ENCODE measurements at regions of chr3 and their contacts with region 1.

Region 1: DNA sequence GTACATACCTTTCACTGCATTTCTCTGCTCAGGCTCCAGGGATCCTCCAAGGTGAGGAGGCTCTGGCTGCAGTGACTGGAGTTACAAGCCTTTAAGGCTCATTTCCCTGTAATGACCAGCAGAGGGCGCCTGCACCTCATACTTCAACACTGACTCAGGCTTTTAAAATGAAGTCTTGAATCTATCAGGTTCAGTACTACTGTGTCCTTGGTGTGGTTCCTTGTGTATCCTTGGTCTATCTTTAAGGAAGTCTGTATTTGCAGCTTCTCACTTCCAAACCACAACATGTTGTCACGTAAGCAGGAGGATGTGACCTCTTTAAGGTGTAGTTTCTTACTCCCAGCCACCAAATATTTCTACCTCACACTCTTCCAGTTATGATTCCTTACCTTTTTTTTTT is 122.5 kb upstream of the ZBED2 start:
- DNase-seq: peak; percentile 84
- ATAC-seq: peak; percentile 92
- H3K4me3 ChIP-seq: no peak overlapping the region
- H3K27ac ChIP-seq: no peak overlapping the region
- H3K4me1 ChIP-seq: peaks cover 3% of the 10 kb centered on the region; the same call in 1 of the 2 replicates
- H3K27me3 ChIP-seq: no peaks in the 10 kb centered on the region
- CTCF ChIP-seq: peak; percentile 93
- POLR2A ChIP-seq: peak; percentile 46; the same call in 1 of the 2 replicates
- RAD21 ChIP-seq: peak; percentile 99

Region 2: DNA sequence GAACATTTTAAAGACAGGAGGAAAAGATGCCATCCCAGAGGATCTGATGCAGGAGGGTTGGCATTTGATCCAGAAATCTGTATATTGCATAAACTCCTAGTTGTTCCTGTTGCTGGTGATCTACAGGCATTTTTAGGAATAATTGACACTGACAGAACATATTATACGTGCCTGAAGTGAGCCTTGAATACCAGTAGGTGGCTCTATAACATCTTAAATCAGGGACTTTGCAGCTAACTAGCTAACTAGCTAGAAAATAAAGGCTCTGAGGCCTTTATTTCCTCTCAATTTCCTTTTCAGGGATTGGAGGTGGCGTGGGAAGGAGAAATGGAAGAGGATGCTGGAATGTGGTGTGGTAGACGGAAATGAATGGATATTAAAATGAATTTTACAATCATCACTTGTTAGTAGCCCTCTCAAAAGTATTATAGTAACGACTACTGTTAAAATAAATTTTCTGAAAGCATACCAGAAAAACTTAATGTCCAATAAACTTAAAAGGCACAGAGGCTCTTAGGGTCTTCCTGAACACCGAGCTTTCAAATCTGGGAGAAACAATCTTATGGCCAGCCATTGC is 48.6 kb before region 1 on chr3:
- CTCF ChIA-PET with region 1: interaction called, 17 read pairs
- POLR2A ChIA-PET with region 1: no interaction called
- dilution Hi-C with region 1: no loop called
- in situ Hi-C with region 1: no loop called
- intact Hi-C with region 1: loop called (anchors 1 kb)
- DNase-seq: peak; percentile 76
- ATAC-seq: peak; percentile 76
- H3K4me3 ChIP-seq: no peak overlapping the region
- H3K27ac ChIP-seq: no peak overlapping the region
- H3K4me1 ChIP-seq: peaks cover 5% of the 10 kb centered on the region
- H3K27me3 ChIP-seq: no peaks in the 10 kb centered on the region
- CTCF ChIP-seq: peak; percentile 88
- POLR2A ChIP-seq: no peak
- RAD21 ChIP-seq: peak; percentile 87

Region 3: DNA sequence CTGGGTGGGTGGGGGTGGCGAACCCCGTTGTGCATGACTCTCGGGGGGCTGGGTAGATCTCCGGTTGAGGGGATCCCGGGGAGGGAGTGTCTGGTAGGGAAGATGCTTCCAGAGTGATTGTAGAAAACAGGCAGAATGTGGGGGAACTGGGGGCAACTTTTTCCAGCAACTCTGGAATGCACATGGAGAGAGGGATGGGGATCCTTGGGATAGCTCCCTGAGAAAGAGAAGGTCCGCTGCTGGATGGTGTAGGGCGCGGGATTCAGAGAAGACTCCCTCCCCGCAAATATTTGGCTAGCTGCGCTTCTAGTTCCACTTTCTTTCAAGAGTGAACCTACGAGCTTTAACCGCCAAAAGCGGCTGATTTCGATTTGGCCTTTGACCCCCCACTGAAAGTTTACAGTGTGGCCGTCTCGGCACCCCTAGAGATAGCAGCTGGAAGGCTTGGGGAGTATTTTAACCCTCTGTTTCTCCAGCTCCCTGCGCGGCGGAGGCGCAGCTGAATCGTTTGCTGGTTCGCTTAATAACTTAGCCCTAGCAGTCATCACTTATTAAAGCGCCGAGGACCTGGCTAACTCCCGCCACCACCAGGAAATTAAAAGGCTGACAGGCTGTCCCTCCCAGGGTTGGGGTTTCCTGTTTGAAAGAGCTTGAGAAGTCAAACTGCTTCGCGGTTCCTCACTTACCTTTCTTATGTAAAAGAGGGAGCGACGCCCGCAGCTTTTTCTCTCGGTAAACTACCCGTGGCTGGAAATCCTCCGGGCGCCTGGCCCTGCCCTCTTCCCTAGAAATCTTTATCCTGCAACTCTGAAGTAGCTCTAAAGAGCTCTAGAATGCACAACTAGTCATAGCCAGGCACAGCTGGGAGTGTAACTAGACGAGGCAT is 142.6 kb after region 1 on chr3:
- CTCF ChIA-PET with region 1: interaction called, 45 read pairs
- POLR2A ChIA-PET with region 1: no interaction called
- dilution Hi-C with region 1: no loop called
- in situ Hi-C with region 1: loop called (anchors 5 kb)
- intact Hi-C with region 1: loop called (anchors 1 kb)
- DNase-seq: peak; percentile 87
- ATAC-seq: peak; percentile 62
- H3K4me3 ChIP-seq: peak overlapping the region; percentile 77
- H3K27ac ChIP-seq: peak overlapping the region; percentile 95
- H3K4me1 ChIP-seq: peaks cover under 1% of the 10 kb centered on the region; the same call in 1 of the 2 replicates
- H3K27me3 ChIP-seq: no peaks in the 10 kb centered on the region
- CTCF ChIP-seq: peak; percentile 57
- POLR2A ChIP-seq: peak; percentile 58; the same call in 1 of the 2 replicates
- RAD21 ChIP-seq: peak; percentile 69

Region 4: GRCh38 chr3:112013058-112013783 is 295.6 kb after region 1 on chr3:
- CTCF ChIA-PET with region 1: interaction called, 3 read pairs
- POLR2A ChIA-PET with region 1: no interaction called
- dilution Hi-C with region 1: no loop called
- in situ Hi-C with region 1: no loop called
- intact Hi-C with region 1: loop called (anchors 1 kb)
- DNase-seq: peak; percentile 80
- ATAC-seq: peak; percentile 93
- H3K4me3 ChIP-seq: no peak overlapping the region
- H3K27ac ChIP-seq: no peak overlapping the region
- H3K4me1 ChIP-seq: peaks cover 7% of the 10 kb centered on the region
- H3K27me3 ChIP-seq: no peaks in the 10 kb centered on the region
- CTCF ChIP-seq: peak; percentile 82
- POLR2A ChIP-seq: no peak
- RAD21 ChIP-seq: peak; percentile 87